T-cell (primary cell): ENCODE measurements at regions of chr10 and their contacts with region 1.

Region 1: GRCh38 chr10:102791754-102792395 is 45.3 kb downstream of the CYP17A1 start:
- DNase-seq: no peak
- ATAC-seq: no peak
- H3K4me3 ChIP-seq: no peak overlapping the region
- H3K4me3 Mint-ChIP-seq: no peak overlapping the region
- H3K27ac ChIP-seq: no peak overlapping the region
- H3K27ac Mint-ChIP-seq: peak overlapping the region in 1 of 2 donors; percentile 44
- H3K4me1 ChIP-seq: peaks cover 18 to 20% of the 10 kb centered on the region in 2 experiments
- H3K4me1 Mint-ChIP-seq: peaks cover 38 to 67% (median 56%) of the 10 kb centered on the region in 3 donors
- H3K27me3 ChIP-seq: no peaks in the 10 kb centered on the region
- H3K27me3 Mint-ChIP-seq: no peaks in the 10 kb centered on the region

Region 2: GRCh38 chr10:103280031-103280430 is 488.2 kb after region 1 on chr10:
- CTCF ChIA-PET with region 1: no interaction called
- POLR2A ChIA-PET with region 1: interaction called in 1 of 2 experiments, 12 read pairs
- DNase-seq: no peak
- ATAC-seq: no peak
- H3K4me3 ChIP-seq: peak overlapping the region in 1 of 2 donors; percentile 15
- H3K4me3 Mint-ChIP-seq: no peak overlapping the region
- H3K27ac ChIP-seq: no peak overlapping the region
- H3K27ac Mint-ChIP-seq: no peak overlapping the region
- H3K4me1 ChIP-seq: peaks cover 2 to 16% of the 10 kb centered on the region in 2 experiments
- H3K4me1 Mint-ChIP-seq: peaks cover 9 to 18% (median 16%) of the 10 kb centered on the region in 3 donors
- H3K27me3 ChIP-seq: peaks cover 25 to 44% of the 10 kb centered on the region in 2 experiments
- H3K27me3 Mint-ChIP-seq: peaks cover 59 to 76% of the 10 kb centered on the region in 2 donors